HEK293 (cell line): ENCODE measurements at regions of chr3 and their contacts with region 1.

Region 1: GRCh38 chr3:124688581-124689454 is 41.4 kb upstream of the UMPS start:
- H3K4me3 ChIP-seq: no peak overlapping the region
- H3K27ac ChIP-seq: no peak overlapping the region
- H3K4me1 ChIP-seq: no peaks in the 10 kb centered on the region
- CTCF ChIP-seq: peak; percentile 58

Region 2: GRCh38 chr3:124569761-124570160 is 119.1 kb before region 1 on chr3:
- CTCF ChIA-PET with region 1: interaction called, 96 read pairs
- POLR2A ChIA-PET with region 1: no interaction called
- H3K4me3 ChIP-seq: no peak overlapping the region
- H3K27ac ChIP-seq: no peak overlapping the region
- H3K4me1 ChIP-seq: no peaks in the 10 kb centered on the region
- CTCF ChIP-seq: no peak

Region 3: GRCh38 chr3:124700880-124701684 is 12.3 kb after region 1 on chr3:
- CTCF ChIA-PET with region 1: interaction called, 15 read pairs
- POLR2A ChIA-PET with region 1: no interaction called
- H3K4me3 ChIP-seq: no peak overlapping the region
- H3K27ac ChIP-seq: no peak overlapping the region
- H3K4me1 ChIP-seq: no peaks in the 10 kb centered on the region
- CTCF ChIP-seq: no peak